ENCODE measurements at regions of chrX and their contacts with region 1.

Region 1: DNA sequence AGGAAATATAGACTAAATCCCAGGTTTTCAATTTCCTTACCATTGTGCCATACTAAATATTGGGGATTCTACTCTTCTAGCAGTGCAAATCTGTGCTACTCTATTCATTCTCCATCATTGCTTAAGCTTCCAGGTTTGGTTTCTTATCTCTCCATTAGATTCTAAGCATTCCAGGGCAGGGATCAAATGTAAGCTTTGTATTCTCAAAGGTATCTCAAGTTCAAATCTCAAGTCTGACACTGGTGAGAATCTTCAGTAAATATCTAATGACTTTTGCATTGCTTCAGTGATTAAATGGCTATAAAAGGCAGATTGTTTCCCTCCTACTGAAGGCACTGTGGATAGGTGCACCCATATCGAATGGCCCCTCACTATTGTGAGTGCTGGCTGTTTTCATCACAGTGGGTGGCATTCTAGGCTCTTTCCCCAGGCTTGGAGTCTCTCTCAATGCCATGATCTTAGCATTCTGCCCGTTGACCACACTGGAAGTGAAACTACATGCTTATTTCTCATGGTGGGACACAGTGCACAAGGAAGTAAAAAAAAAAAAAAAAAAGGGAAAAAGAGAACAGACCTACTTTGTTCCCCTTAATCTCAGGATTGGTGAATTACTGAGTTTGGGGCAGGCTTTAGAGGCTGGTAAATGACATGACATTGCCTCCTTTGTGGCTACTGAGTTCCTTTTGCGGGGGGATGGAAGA is 28.7 kb downstream of the FAM9C start:
- DNase-seq: peak in 1 of 2 experiments; percentile 46
- H3K4me3 ChIP-seq: no peak overlapping the region
- H3K27ac ChIP-seq: no peak overlapping the region
- H3K4me1 ChIP-seq: peaks cover 13% of the 10 kb centered on the region
- H3K27me3 ChIP-seq: no peaks in the 10 kb centered on the region
- CTCF ChIP-seq: no peak

Region 2: DNA sequence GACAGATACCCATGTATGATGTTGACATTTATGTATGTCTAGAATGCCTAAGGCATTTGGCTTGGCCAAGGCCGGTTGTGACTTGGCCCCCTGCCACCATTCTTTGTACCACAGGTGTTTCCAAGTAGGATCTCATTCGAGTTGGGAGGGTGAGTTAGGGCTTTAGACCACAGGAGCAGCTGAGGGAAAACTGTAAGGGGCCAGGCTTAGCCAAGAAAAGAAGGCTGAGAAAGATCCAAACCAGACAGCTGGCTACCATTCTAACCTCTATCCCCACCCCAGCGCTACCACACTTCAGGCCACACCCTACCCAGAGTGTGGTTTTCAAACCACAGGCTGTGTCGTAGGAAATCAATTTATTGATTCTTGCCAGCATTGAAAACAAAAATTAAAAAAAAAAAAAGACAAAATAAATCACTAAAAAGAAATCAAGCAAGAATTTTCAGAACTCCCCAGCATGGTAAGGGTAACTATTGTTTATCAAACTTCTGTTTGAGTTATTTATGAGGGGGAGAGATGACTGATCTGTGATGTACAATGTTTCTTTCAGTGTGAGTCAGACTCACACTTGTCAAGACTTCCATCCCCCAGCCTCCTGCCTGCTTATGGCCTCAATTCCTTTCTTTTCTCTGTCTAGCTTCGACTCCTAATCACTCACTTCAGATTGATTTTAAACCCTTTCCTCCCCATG is 30.9 kb before region 1 on chrX:
- CTCF ChIA-PET with region 1: no interaction called
- POLR2A ChIA-PET with region 1: interaction called, 15 read pairs
- intact Hi-C with region 1: no loop called
- DNase-seq: peak; percentile 85 to 88
- H3K4me3 ChIP-seq: peak overlapping the region; percentile 23; the same call in 1 of the 2 replicates
- H3K27ac ChIP-seq: peak overlapping the region; percentile 91
- H3K4me1 ChIP-seq: peaks cover 56% of the 10 kb centered on the region
- H3K27me3 ChIP-seq: no peaks in the 10 kb centered on the region
- CTCF ChIP-seq: no peak

Region 3: GRCh38 chrX:13341491-13342101 is 325.9 kb after region 1 on chrX:
- CTCF ChIA-PET with region 1: interaction called, 15 read pairs
- POLR2A ChIA-PET with region 1: no interaction called
- intact Hi-C with region 1: no loop called
- DNase-seq: no peak
- H3K4me3 ChIP-seq: no peak overlapping the region
- H3K27ac ChIP-seq: no peak overlapping the region
- H3K4me1 ChIP-seq: no peaks in the 10 kb centered on the region
- H3K27me3 ChIP-seq: no peaks in the 10 kb centered on the region
- CTCF ChIP-seq: no peak

Measured in PC-9 (cell line).